Mammary epithelial cell (primary cell): ENCODE measurements at regions of chr6 and their contacts with region 1.

Region 1: GRCh38 chr6:87799651-87800050 is 97.6 kb upstream of the AKIRIN2 start:
- DNase-seq: no peak
- H3K4me3 ChIP-seq: no peak overlapping the region
- H3K27ac ChIP-seq: no peak overlapping the region
- H3K4me1 ChIP-seq: peaks cover 18% of the 10 kb centered on the region
- H3K27me3 ChIP-seq: no peaks in the 10 kb centered on the region
- CTCF ChIP-seq: no peak

Region 2: DNA sequence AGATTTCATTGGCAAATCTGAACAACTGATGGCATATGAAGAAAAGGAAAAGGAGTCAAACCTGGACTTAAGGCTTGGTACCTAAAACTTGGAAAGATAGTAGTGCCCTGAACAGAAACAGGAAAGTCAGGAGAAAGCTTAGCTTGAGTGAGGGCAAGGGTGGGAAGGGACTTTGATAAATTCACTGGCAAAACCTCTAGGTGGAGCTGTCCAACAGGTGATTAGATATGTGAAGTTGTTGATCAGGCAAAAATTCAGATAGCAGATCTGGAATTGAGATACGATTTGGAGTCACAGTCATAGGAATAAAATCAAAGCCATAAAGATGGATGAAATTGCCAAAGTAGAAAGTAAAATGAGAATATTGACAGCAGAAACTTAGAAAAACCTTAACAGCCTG is 660.4 kb before region 1 on chr6:
- CTCF ChIA-PET with region 1: no interaction called
- dilution Hi-C with region 1: no loop called
- in situ Hi-C with region 1: no loop called
- intact Hi-C with region 1: loop called (anchors 10 kb)
- DNase-seq: peak; percentile 40
- H3K4me3 ChIP-seq: no peak overlapping the region
- H3K27ac ChIP-seq: no peak overlapping the region
- H3K4me1 ChIP-seq: no peaks in the 10 kb centered on the region
- H3K27me3 ChIP-seq: no peaks in the 10 kb centered on the region
- CTCF ChIP-seq: peak; percentile 70 to 76

Region 3: GRCh38 chr6:87407901-87408720 is 391.5 kb before region 1 on chr6 and contains the start of gene CFAP206:
- CTCF ChIA-PET with region 1: no interaction called
- dilution Hi-C with region 1: no loop called
- in situ Hi-C with region 1: no loop called
- intact Hi-C with region 1: loop called (anchors 5 kb)
- DNase-seq: peak; percentile 76
- H3K4me3 ChIP-seq: peak within 1 kb of the TSS; percentile 74 to 91 (median 82)
- H3K27ac ChIP-seq: peak within 1 kb of the TSS; percentile 39
- H3K4me1 ChIP-seq: peaks cover 8% of the 10 kb centered on the region
- H3K27me3 ChIP-seq: no peaks in the 10 kb centered on the region
- CTCF ChIP-seq: peak; percentile 14 to 43
- total RNA-seq, gene CFAP206: 0.99 to 1.2 TPM

Region 4: GRCh38 chr6:87589693-87590549 is 209.7 kb before region 1 on chr6 and contains the starts of genes ORC3 and RARS2:
- CTCF ChIA-PET with region 1: no interaction called
- dilution Hi-C with region 1: no loop called
- in situ Hi-C with region 1: loop called in 1 of 2 experiments (anchors 10 kb)
- intact Hi-C with region 1: loop called (anchors 5 kb)
- DNase-seq: peak; percentile 96
- H3K4me3 ChIP-seq: peak within 1 kb of the TSS; percentile 84 to 100 (median 87)
- H3K27ac ChIP-seq: peak within 1 kb of the TSS; percentile 79
- H3K4me1 ChIP-seq: peaks cover 12% of the 10 kb centered on the region
- H3K27me3 ChIP-seq: no peaks in the 10 kb centered on the region
- CTCF ChIP-seq: no peak
- total RNA-seq, gene ORC3: 21.5 to 22.2 TPM
- total RNA-seq, gene RARS2: 32.2 to 33.8 TPM

Region 5: GRCh38 chr6:87731818-87732661 is 67.6 kb before region 1 on chr6:
- CTCF ChIA-PET with region 1: no interaction called
- dilution Hi-C with region 1: no loop called
- in situ Hi-C with region 1: no loop called
- intact Hi-C with region 1: loop called (anchors 2 kb)
- DNase-seq: peak; percentile 98
- H3K4me3 ChIP-seq: no peak overlapping the region
- H3K27ac ChIP-seq: peak overlapping the region; percentile 92
- H3K4me1 ChIP-seq: peaks cover 44% of the 10 kb centered on the region
- H3K27me3 ChIP-seq: no peaks in the 10 kb centered on the region
- CTCF ChIP-seq: no peak

Region 6: GRCh38 chr6:87756858-87757257 is 42.8 kb before region 1 on chr6:
- CTCF ChIA-PET with region 1: no interaction called
- dilution Hi-C with region 1: loop called (anchors 5 kb)
- in situ Hi-C with region 1: no loop called
- intact Hi-C with region 1: no loop called
- DNase-seq: peak; percentile 93
- H3K4me3 ChIP-seq: no peak overlapping the region
- H3K27ac ChIP-seq: peak overlapping the region; percentile 42
- H3K4me1 ChIP-seq: peaks cover 21% of the 10 kb centered on the region
- H3K27me3 ChIP-seq: no peaks in the 10 kb centered on the region
- CTCF ChIP-seq: no peak